ENCODE measurements at regions of chr6 and their contacts with region 1.

Region 1: GRCh38 chr6:29016559-29017427 is 11.7 kb upstream of the ZNF311 start:
- DNase-seq: peak; percentile 76
- ATAC-seq: peak; percentile 96
- H3K4me3 ChIP-seq: peak overlapping the region; percentile 66 to 99
- H3K27ac ChIP-seq: peak overlapping the region; percentile 81
- H3K4me1 ChIP-seq: no peaks in the 10 kb centered on the region
- H3K27me3 ChIP-seq: no peaks in the 10 kb centered on the region
- CTCF ChIP-seq: peak; percentile 93

Region 2: DNA sequence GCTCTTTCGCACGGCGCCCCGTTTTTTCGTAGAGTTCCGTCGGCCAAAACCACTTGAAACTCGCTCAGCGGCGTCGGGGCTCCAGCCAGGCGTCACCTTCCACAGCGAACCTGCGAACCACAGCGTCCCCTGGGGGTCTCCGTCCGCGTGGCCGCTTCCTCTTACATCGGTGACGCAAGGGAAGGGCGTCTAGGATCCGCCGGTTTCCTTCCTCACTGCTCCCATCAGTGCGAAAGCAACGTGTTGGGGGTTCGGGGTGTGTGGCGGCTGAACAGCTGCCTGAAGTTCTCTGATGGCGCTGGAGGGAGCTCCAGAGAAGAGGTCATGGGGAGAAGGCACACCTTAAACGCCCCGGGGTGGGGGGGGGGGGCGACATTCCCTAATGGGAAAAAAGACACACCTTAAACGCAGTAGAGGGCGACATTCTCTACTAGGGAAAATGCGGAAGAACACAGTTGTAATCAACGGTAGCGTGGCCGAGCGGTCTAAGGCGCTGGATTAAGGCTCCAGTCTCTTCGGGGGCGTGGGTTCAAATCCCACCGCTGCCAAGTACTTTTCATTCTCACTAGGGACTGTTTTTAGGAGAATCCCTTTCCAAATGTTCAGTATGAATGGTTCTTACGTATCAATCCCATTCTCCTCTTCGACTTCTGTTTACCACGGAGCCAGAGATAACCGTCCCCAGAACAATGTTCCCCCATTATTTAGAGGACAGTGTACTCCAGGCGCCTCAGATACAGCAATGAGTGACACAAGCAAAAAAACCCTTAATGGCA is 28.1 kb before region 1 on chr6:
- CTCF ChIA-PET with region 1: no interaction called
- POLR2A ChIA-PET with region 1: interaction called, 7 read pairs
- in situ Hi-C with region 1: no loop called
- intact Hi-C with region 1: loop called (anchors 1 kb)
- DNase-seq: no peak
- ATAC-seq: peak; percentile 81
- H3K4me3 ChIP-seq: peak overlapping the region; percentile 51 to 76
- H3K27ac ChIP-seq: peak overlapping the region; percentile 79
- H3K4me1 ChIP-seq: peaks cover 9% of the 10 kb centered on the region
- H3K27me3 ChIP-seq: no peaks in the 10 kb centered on the region
- CTCF ChIP-seq: peak; percentile 92

Region 3: DNA sequence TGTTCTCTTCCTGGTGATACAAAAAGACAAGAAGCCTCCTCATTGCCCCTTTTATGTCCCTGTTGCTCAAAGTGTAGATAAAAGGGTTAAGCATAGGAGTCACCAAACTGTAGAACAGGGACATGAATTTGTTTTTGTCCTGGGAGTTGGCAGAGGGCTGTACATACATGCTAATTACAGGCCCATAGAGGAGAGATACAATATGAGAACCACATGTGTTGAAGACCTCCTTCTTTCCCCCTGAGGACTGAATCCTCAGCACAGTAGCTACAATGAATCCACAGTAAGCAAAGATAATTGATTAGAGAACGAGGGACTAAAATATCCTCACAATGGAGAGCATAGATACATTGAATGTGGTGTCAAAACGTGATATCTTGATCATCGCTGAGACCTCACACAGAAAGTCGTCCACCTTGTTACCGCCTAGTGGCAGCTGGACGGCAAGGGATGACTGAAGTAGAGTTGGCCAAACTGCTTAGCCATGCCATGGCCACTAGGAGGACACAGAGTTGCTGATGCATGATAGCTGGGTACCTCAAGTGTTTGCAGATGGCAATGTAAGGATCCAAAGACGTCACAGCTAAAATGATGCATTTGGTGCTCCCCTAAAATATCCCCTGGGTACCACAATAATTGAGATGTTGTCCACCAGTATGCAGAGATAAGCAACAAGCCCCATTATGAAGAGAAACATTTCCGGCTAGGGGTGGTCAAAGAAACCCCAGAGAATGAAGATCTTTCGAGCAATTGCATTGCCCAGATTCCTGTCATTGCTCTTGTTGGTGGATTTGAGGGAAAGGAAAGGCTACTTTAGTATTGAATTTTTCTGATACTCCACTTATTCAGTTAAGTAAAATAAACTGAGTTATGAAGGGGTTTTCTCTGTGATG is 55.3 kb after region 1 on chr6:
- CTCF ChIA-PET with region 1: no interaction called
- POLR2A ChIA-PET with region 1: no interaction called
- in situ Hi-C with region 1: no loop called
- intact Hi-C with region 1: no loop called
- DNase-seq: peak; percentile 20
- ATAC-seq: peak; percentile 91
- H3K4me3 ChIP-seq: no peak overlapping the region
- H3K27ac ChIP-seq: no peak overlapping the region
- H3K4me1 ChIP-seq: no peaks in the 10 kb centered on the region; the same call in 1 of the 2 replicates
- H3K27me3 ChIP-seq: peaks cover 7% of the 10 kb centered on the region
- CTCF ChIP-seq: peak; percentile 84

Region 4: DNA sequence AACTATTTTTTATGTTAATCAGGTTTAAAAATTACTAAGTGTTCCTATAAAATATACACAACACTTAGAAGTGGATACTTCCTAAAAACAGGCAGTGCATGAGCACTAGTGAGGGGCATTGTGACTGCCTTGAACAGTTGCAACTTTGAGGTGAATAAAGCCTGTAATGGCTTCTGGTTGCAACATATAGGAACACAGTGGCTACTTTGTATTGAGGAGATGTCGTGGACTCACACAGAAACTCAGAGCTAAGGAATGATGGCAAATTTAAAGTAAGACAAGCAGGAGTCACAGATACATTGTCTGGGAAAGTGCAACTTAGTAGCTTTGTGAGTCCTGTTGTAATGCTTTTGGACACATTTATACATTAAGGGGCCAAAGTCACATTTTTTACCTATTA is 924.7 kb after region 1 on chr6:
- CTCF ChIA-PET with region 1: no interaction called
- POLR2A ChIA-PET with region 1: interaction called, 13 read pairs
- in situ Hi-C with region 1: no loop called
- intact Hi-C with region 1: no loop called
- DNase-seq: no peak
- ATAC-seq: no peak
- H3K4me3 ChIP-seq: peak overlapping the region; percentile 62 to 78
- H3K27ac ChIP-seq: peak overlapping the region; percentile 89
- H3K4me1 ChIP-seq: peaks cover 4% of the 10 kb centered on the region
- H3K27me3 ChIP-seq: no peaks in the 10 kb centered on the region
- CTCF ChIP-seq: no peak